H1 (cell line): ENCODE measurements at regions of chr1 and their contacts with region 1.

Region 1: GRCh38 chr1:185291652-185292051 is 25.4 kb downstream of the IVNS1ABP start:
- DNase-seq: no peak
- H3K4me3 ChIP-seq: no peak overlapping the region
- H3K27ac ChIP-seq: no peak overlapping the region
- H3K4me1 ChIP-seq: no peaks in the 10 kb centered on the region
- H3K27me3 ChIP-seq: no peaks in the 10 kb centered on the region
- CTCF ChIP-seq: no peak
- EP300 ChIP-seq: no peak
- POLR2A ChIP-seq: no peak
- RAD21 ChIP-seq: no peak

Region 2: DNA sequence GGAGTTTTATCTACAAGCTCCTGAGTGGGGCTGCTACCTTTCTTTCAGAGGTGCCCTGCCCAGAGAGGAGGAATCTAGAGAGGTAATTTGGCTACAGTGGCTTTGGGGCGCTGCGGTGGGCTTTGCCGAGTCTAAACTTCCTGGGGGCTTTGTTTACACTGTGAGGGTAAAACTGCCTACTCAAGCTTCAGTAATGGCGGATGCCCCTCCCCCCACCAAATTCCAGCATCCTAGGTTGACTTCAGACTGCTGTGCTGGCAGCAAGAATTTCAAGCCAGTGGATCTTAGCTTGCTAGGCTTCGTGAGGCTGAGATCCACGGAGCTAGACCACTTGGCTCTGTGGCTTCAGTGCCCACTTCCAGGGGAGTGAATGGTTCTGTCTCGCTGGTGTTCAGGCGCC is 90.8 kb before region 1 on chr1:
- CTCF ChIA-PET with region 1: no interaction called
- POLR2A ChIA-PET with region 1: no interaction called
- DNase-seq: peak in 1 of 2 experiments; percentile 53
- H3K4me3 ChIP-seq: no peak overlapping the region
- H3K27ac ChIP-seq: no peak overlapping the region
- H3K4me1 ChIP-seq: no peaks in the 10 kb centered on the region
- H3K27me3 ChIP-seq: no peaks in the 10 kb centered on the region
- CTCF ChIP-seq: no peak
- EP300 ChIP-seq: no peak
- POLR2A ChIP-seq: no peak
- RAD21 ChIP-seq: no peak

Region 3: DNA sequence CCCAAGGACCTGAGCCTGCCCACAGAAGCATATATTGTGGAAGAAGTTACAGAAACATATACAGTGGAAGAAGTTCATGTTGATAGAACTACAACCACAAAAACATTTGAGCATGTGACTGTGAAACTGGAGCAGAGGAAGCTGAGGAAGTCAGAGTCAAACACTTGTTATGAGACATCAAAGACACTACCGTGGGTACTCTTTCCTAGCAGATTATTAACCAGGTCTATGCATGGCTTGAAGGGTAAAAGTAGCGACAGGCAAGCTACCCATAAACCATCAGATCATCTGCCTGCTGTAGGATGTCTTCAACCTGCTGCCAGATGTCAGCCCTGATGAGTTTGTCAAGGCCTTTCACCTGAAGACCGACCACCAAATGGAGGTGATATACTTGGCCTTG is 10.4 kb before region 1 on chr1:
- CTCF ChIA-PET with region 1: no interaction called
- POLR2A ChIA-PET with region 1: interaction called, 12 read pairs
- DNase-seq: no peak
- H3K4me3 ChIP-seq: no peak overlapping the region
- H3K27ac ChIP-seq: no peak overlapping the region
- H3K4me1 ChIP-seq: no peaks in the 10 kb centered on the region
- H3K27me3 ChIP-seq: no peaks in the 10 kb centered on the region
- CTCF ChIP-seq: no peak
- EP300 ChIP-seq: no peak
- POLR2A ChIP-seq: no peak
- RAD21 ChIP-seq: no peak

Region 4: GRCh38 chr1:185305419-185305818 is 13.8 kb after region 1 on chr1:
- CTCF ChIA-PET with region 1: interaction called, 10 read pairs
- POLR2A ChIA-PET with region 1: interaction called, 13 read pairs
- DNase-seq: no peak
- H3K4me3 ChIP-seq: no peak overlapping the region
- H3K27ac ChIP-seq: no peak overlapping the region
- H3K4me1 ChIP-seq: no peaks in the 10 kb centered on the region
- H3K27me3 ChIP-seq: no peaks in the 10 kb centered on the region
- CTCF ChIP-seq: no peak
- EP300 ChIP-seq: no peak
- POLR2A ChIP-seq: no peak
- RAD21 ChIP-seq: no peak